Transverse colon (tissue), 4 donors: ENCODE measurements at regions of chr14 and their contacts with region 1.

Region 1: DNA sequence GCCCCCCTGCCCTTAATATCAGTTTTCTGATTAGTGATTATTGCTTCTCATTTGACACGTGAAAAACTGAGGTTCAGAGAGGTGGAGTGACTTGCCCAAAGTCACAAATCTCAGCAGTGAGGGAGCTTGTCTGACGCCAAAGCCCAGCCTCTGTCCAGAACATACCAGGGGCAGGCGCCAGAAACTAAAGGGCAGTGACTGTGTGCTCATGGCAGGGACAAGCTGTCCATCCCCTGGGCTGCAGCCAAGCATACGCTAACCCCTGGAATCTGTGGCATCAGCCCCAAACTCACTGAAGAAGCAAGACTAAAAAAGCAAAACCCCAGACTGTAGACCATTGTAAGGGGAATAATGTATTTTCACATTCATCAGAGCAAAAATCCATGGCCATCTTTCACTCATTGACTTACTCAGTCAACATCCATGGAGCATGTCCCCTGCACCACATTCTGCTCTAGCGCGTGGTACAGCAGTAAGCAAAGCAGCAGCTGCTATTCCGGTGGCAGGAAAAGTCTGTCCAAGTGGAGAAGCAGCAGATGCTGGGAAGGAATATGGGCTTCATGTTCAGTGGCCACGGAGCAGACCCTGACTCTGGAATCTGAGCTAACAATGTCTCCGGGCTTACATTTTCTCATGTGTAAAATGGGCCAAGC is 1.5 kb upstream of the SERPINA4 start:
- DNase-seq: no peak
- H3K4me3 ChIP-seq: no peak overlapping the region
- H3K27ac ChIP-seq: no peak overlapping the region
- H3K4me1 ChIP-seq: no peaks in the 10 kb centered on the region
- H3K27me3 ChIP-seq: no peaks in the 10 kb centered on the region
- CTCF ChIP-seq: no peak
- EP300 ChIP-seq: no peak
- POLR2A ChIP-seq: no peak

Region 2: DNA sequence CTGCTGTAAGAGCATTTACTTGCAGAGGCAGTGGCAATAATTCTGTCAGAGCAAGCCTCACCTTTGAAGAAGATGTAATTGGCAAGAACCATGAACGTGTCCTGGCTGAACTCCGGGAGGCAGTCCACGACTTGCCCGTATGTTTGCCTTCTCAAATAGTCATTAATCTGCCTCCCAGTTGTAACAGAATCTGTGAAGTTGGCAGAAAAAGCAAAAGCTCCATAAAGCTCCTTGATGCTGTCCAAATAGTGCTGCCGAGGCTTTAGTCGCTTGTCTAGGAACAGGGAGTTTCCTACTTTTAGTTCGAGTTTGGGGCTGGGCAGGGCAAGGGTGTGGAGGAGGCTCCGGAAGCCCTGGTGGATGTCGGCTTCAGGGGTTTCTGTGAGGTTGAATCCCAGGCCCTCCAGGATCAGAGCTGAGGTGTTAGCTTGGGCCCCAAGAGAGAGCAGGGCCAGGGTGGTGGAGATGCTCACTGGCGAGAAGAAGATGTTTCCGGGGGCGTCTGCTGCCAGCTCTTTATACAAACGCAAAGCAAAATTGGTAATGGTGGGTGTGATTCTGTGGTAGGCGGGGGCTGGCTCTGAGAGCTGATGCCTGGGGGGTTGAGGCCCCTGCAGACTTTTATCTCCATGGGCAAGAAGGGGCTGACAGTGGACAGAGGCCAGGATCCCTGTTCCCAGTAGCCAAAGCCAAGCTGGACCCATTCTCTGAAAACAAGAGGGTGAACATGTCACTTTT is 111.5 kb before region 1 on chr14:
- in situ Hi-C with region 1: no loop called
- intact Hi-C with region 1: no loop called
- DNase-seq: no peak
- H3K4me3 ChIP-seq: no peak overlapping the region
- H3K27ac ChIP-seq: no peak overlapping the region
- H3K4me1 ChIP-seq: no peaks in the 10 kb centered on the region
- H3K27me3 ChIP-seq: peaks cover 4% of the 10 kb centered on the region
- CTCF ChIP-seq: no peak
- EP300 ChIP-seq: no peak
- POLR2A ChIP-seq: no peak

Region 3: DNA sequence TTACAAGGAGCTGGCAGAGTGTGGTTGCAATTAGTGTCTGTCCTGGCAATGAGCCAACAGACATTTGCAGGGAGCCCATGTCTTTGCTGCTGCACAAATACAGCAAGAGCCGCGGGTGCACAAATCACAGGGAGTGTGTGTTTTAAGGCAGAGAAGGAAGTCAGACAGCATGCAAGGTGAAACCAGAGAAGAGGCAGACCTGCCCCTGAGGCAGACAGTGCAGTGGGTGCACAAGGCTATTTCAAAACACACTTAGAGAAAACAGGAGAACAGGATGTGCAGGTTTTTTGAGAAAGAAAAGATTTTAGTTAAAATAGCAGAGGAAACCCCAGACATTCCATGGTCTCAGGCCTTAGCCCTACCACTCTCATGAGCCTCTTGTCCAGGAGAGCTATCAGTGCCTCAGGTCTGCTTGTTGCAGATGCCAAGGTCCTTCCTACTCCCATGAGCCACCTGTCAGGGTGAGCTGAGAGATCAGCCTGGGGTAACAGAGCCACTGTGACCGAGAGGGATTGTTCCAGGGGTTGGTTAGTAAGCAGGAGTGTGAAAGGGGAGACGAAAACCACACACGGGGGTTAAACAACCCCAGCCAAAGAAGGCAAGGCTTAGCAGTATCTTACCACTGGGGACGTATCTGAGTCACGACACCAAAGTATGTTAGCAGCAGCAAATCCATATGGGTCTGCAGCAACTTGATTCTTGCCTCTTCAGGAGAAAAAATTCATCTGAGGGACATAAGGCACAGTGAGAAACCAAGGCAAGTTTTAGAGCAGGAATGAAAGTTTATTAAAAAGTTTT is 1557.5 kb after region 1 on chr14:
- in situ Hi-C with region 1: no loop called
- intact Hi-C with region 1: loop called (anchors 5 kb)
- DNase-seq: no peak
- H3K4me3 ChIP-seq: no peak overlapping the region
- H3K27ac ChIP-seq: no peak overlapping the region
- H3K4me1 ChIP-seq: peaks cover 0 to 6% (median 0%) of the 10 kb centered on the region in 4 donors
- H3K27me3 ChIP-seq: no peaks in the 10 kb centered on the region
- CTCF ChIP-seq: no peak
- EP300 ChIP-seq: no peak
- POLR2A ChIP-seq: no peak